A673 (cell line): ENCODE measurements at regions of chr11 and their contacts with region 1.

Region 1: DNA sequence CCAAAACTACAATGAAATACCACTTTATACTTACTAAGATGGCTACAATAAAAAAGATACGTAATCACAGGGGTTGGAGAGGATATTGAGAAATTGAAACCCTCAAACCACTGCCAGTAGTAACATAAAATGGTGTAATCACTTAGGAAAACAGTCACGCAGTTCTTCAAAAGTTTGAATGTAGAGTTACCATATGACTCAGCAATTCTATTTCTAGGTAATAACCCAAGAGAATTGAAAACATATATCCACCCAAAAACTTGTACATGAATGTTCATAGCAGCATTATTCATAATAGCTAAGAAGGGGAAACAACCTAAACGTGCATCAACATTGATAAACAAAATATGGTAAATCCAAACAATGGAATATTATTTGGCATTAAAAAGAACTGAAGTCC is 24.4 kb upstream of the PSMA1 start:
- DNase-seq: no peak
- H3K4me3 ChIP-seq: no peak overlapping the region
- H3K27ac ChIP-seq: no peak overlapping the region
- H3K4me1 ChIP-seq: no peaks in the 10 kb centered on the region
- H3K27me3 ChIP-seq: no peaks in the 10 kb centered on the region
- CTCF ChIP-seq: no peak

Region 2: GRCh38 chr11:14101388-14101787 is 443.2 kb before region 1 on chr11:
- CTCF ChIA-PET with region 1: no interaction called
- POLR2A ChIA-PET with region 1: no interaction called
- intact Hi-C with region 1: no loop called
- DNase-seq: no peak
- H3K4me3 ChIP-seq: no peak overlapping the region
- H3K27ac ChIP-seq: no peak overlapping the region
- H3K4me1 ChIP-seq: no peaks in the 10 kb centered on the region
- H3K27me3 ChIP-seq: peaks cover 6% of the 10 kb centered on the region
- CTCF ChIP-seq: no peak

Region 3: GRCh38 chr11:14764579-14765527 is 220.2 kb after region 1 on chr11:
- CTCF ChIA-PET with region 1: no interaction called
- POLR2A ChIA-PET with region 1: no interaction called
- intact Hi-C with region 1: loop called (anchors 10 kb)
- DNase-seq: no peak
- H3K4me3 ChIP-seq: no peak overlapping the region
- H3K27ac ChIP-seq: no peak overlapping the region
- H3K4me1 ChIP-seq: no peaks in the 10 kb centered on the region
- H3K27me3 ChIP-seq: no peaks in the 10 kb centered on the region
- CTCF ChIP-seq: no peak